ENCODE measurements at regions of chr16 and their contacts with region 1.

Region 1: GRCh38 chr16:17345043-17345442 is 125.7 kb downstream of the XYLT1 start:
- DNase-seq: no peak
- ATAC-seq: peak; percentile 61

Region 2: GRCh38 chr16:16867973-16868372 is 477.1 kb before region 1 on chr16:
- intact Hi-C with region 1: loop called (anchors 5 kb)
- DNase-seq: no peak
- ATAC-seq: no peak

Region 3: DNA sequence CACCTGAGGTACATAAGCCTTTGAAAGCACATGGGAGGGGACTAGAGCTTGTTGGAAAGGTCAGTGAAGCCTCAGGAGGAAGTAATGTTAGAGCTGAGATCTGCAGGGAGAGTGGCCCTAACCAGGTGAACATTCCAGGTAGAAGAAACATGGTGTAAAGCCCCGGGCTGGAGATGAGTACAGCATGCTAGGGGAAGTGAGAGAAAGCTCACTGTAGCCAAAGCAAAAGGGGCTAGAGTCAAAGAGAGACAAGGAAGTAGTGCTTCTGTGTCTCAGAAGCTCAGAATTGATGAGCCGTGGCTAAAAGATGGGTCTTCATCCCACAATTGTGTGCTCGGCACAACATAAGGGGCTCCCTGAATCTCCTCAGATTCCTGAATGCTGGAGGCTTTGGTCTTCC is 356.1 kb before region 1 on chr16:
- intact Hi-C with region 1: no loop called
- DNase-seq: no peak
- ATAC-seq: no peak

Region 4: DNA sequence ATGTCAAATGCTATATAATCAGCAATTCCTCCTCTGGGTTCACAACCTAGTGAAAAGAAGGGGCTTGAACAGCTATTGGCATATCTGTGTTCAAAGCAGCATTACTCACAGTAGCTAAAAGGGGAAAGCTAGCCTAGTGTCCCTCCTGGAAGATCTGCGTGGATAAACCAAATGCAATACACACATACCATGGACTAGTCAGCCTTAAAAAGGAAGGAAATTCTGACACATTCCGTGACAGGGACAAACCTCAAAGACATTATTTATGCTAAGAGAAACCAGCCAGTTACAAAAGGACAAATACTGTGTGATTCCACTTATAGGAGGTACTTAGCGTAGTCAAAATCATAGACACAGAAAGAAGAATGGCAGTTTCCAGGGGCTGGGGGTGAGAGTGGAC is 35.6 kb after region 1 on chr16:
- intact Hi-C with region 1: loop called (anchors 5 kb)
- DNase-seq: no peak
- ATAC-seq: no peak